ENCODE measurements at regions of chr20 and their contacts with region 1.

Region 1: GRCh38 chr20:48538420-48539203 is 289.2 kb downstream of the PREX1 start:
- DNase-seq: peak; percentile 51 to 55
- ATAC-seq: peak; percentile 80 to 84; a peak in 5 of 6 replicates
- H3K4me3 ChIP-seq: no peak overlapping the region
- H3K27ac ChIP-seq: peak overlapping the region; percentile 42 to 75
- H3K4me1 ChIP-seq: peaks cover 20% of the 10 kb centered on the region
- CTCF ChIP-seq: no peak
- EP300 ChIP-seq: no peak
- POLR2A ChIP-seq: no peak
- RAD21 ChIP-seq: no peak

Region 2: DNA sequence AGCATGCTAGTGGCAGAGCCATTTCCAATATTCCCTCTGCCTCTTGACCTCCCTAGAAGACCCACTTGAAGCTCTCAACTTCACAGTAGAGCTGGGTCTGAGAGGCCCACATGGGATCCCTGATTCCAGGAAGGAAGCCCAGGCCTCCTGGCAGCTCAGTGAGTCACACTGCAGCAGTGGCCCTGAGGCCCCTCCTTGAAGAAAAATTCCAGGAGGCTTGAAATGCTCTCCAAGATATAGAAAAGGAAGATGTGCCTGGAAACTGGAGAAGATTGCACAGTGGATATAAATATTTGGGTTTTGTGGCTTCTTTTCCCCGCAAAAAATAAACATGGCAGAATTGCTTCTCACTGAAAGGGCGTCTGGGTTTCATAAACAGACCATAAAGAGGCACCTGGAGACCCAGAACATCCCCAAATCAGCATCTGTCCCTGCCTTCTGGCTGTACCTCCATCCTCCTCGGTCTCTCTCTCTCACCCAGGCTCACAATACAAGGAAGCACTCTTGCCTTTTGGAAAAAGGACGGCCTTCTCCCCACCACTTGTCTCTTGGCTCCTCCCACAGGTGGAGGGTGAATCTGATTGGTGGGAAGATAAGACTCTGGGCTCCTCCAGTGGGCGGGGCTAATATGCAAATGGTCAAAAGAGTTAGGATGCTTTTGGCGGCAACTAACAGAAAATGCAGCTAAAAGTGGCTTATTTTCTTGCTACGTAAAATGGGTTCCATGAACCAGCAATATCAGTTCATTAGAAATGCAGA is 553.3 kb before region 1 on chr20:
- CTCF ChIA-PET with region 1: no interaction called
- POLR2A ChIA-PET with region 1: no interaction called
- DNase-seq: peak; percentile 22 to 40
- ATAC-seq: peak; percentile 21 to 29; a peak in 2 of 6 replicates
- H3K4me3 ChIP-seq: no peak overlapping the region
- H3K27ac ChIP-seq: no peak overlapping the region
- H3K4me1 ChIP-seq: no peaks in the 10 kb centered on the region
- CTCF ChIP-seq: no peak
- EP300 ChIP-seq: no peak
- POLR2A ChIP-seq: no peak
- RAD21 ChIP-seq: no peak

Region 3: GRCh38 chr20:48550610-48551195 is 12.1 kb after region 1 on chr20:
- CTCF ChIA-PET with region 1: interaction called, 10 read pairs
- POLR2A ChIA-PET with region 1: no interaction called
- DNase-seq: no peak
- ATAC-seq: no peak
- H3K4me3 ChIP-seq: no peak overlapping the region
- H3K27ac ChIP-seq: peak overlapping the region in 1 of 2 experiments; percentile 50; a peak in 2 of 6 replicates
- H3K4me1 ChIP-seq: peaks cover 10% of the 10 kb centered on the region
- CTCF ChIP-seq: no peak
- EP300 ChIP-seq: no peak
- POLR2A ChIP-seq: no peak
- RAD21 ChIP-seq: no peak

Measured in A549 (cell line).